CD4-positive, alpha-beta T cell (primary cell): ENCODE measurements at regions of chr2 and their contacts with region 1.

Region 1: GRCh38 chr2:55050133-55050994 is at the start of gene RTN4:
- DNase-seq: peak; percentile 94 to 99 (median 98)
- ATAC-seq: peak; percentile 89
- H3K4me3 ChIP-seq: peak within 1 kb of the TSS; percentile 90
- H3K4me3 Mint-ChIP-seq: peak within 1 kb of the TSS; percentile 99
- H3K27ac ChIP-seq: peak within 1 kb of the TSS; percentile 83 to 90
- H3K27ac Mint-ChIP-seq: peak within 1 kb of the TSS; percentile 97
- H3K4me1 ChIP-seq: peaks cover 30% of the 10 kb centered on the region
- H3K4me1 Mint-ChIP-seq: peaks cover 81% of the 10 kb centered on the region
- H3K27me3 ChIP-seq: no peaks in the 10 kb centered on the region
- H3K27me3 Mint-ChIP-seq: no peaks in the 10 kb centered on the region
- CTCF ChIP-seq: no peak
- total RNA-seq, gene RTN4: 84.9 to 85.7 TPM

Region 2: GRCh38 chr2:55014962-55015939 is 35.1 kb before region 1 on chr2:
- CTCF ChIA-PET with region 1: interaction called, 24 read pairs
- POLR2A ChIA-PET with region 1: interaction called, 13 read pairs
- intact Hi-C with region 1: loop called in 1 of 2 experiments (anchors 2 kb)
- DNase-seq: peak in 13 of 14 experiments; percentile 4 to 74 (median 26)
- ATAC-seq: peak; percentile 23
- H3K4me3 ChIP-seq: no peak overlapping the region
- H3K4me3 Mint-ChIP-seq: no peak overlapping the region
- H3K27ac ChIP-seq: no peak overlapping the region
- H3K27ac Mint-ChIP-seq: no peak overlapping the region
- H3K4me1 ChIP-seq: peaks cover 4% of the 10 kb centered on the region
- H3K4me1 Mint-ChIP-seq: peaks cover 59% of the 10 kb centered on the region
- H3K27me3 ChIP-seq: no peaks in the 10 kb centered on the region
- H3K27me3 Mint-ChIP-seq: no peaks in the 10 kb centered on the region
- CTCF ChIP-seq: peak; percentile 82

Region 3: DNA sequence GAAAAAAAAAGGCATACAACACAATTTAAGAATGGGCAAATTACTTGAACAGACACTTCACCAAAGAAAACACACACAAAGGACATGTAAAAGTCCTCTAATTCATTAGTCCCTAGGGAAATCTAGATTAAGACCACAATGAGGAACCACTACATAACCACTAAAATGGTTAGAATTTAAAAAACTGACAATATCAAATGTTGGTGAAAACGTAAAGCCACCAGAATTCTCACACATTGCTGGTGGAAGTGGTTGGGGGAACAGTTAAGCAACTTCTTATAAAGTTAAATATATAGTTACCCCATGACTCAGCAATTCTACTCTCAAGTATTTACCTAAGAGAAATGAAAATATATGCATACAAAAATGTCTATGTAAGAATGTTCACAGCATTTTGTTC is 11.9 kb before region 1 on chr2:
- CTCF ChIA-PET with region 1: interaction called, 5 read pairs
- POLR2A ChIA-PET with region 1: interaction called, 28 read pairs
- intact Hi-C with region 1: loop called in 1 of 2 experiments (anchors 2 kb)
- DNase-seq: no peak
- ATAC-seq: no peak
- H3K4me3 ChIP-seq: no peak overlapping the region
- H3K4me3 Mint-ChIP-seq: no peak overlapping the region
- H3K27ac ChIP-seq: no peak overlapping the region
- H3K27ac Mint-ChIP-seq: no peak overlapping the region
- H3K4me1 ChIP-seq: peaks cover 4% of the 10 kb centered on the region
- H3K4me1 Mint-ChIP-seq: peaks cover 70% of the 10 kb centered on the region
- H3K27me3 ChIP-seq: no peaks in the 10 kb centered on the region
- H3K27me3 Mint-ChIP-seq: no peaks in the 10 kb centered on the region
- CTCF ChIP-seq: no peak

Region 4: GRCh38 chr2:55223958-55224760 is 173.8 kb after region 1 on chr2:
- CTCF ChIA-PET with region 1: interaction called, 11 read pairs
- POLR2A ChIA-PET with region 1: interaction called, 14 read pairs
- intact Hi-C with region 1: loop called in 1 of 2 experiments (anchors 2 kb)
- DNase-seq: peak in 3 of 14 experiments; percentile 9 to 46 (median 34)
- ATAC-seq: no peak
- H3K4me3 ChIP-seq: peak overlapping the region; percentile 53
- H3K4me3 Mint-ChIP-seq: peak overlapping the region; percentile 87
- H3K27ac ChIP-seq: peak overlapping the region in 1 of 2 donors; percentile 80
- H3K27ac Mint-ChIP-seq: peak overlapping the region; percentile 86
- H3K4me1 ChIP-seq: peaks cover 14% of the 10 kb centered on the region
- H3K4me1 Mint-ChIP-seq: peaks cover 42% of the 10 kb centered on the region
- H3K27me3 ChIP-seq: no peaks in the 10 kb centered on the region
- H3K27me3 Mint-ChIP-seq: no peaks in the 10 kb centered on the region
- CTCF ChIP-seq: no peak

Region 5: DNA sequence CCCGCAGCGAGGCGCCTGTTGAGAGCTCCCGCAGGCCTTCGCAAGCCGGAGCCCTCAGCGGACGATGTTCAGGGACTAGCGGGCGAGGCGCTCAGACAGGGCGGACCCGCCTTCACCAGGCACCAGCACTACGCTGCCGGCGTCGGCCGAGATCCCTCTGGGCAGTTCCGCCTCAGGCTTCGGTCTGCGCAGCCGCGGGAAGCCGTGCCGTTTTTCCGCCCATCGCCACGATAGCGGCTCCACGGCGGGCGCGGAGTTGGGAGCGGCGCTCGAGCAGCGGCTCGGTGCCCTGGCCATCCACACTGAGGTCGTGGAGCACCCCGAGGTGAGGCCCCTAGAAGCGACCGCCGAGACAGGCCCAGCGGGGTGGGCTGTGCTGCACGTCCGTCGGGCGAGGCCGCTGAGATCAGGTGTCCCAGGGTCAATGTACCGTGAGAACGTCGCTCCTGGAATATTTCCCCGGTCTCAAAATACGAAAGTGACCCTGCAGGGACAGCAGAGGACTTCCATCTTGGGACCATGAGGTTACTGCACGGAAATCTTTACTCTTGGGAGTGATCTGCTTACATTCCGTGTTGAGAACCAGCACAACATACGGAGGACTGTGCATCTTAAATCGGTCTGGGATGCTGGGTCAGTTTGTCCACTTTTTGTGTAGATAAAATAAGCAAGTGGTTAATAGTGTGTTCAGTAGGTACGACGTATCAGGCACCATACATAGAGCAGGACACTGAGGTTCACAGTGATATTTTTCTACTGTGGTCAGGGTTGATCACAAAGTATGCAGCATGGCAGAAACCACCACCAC is 231.9 kb after region 1 on chr2:
- CTCF ChIA-PET with region 1: no interaction called
- POLR2A ChIA-PET with region 1: no interaction called
- intact Hi-C with region 1: loop called in 1 of 2 experiments (anchors 5 kb)
- DNase-seq: peak; percentile 77 to 93 (median 86)
- ATAC-seq: peak; percentile 98
- H3K4me3 ChIP-seq: peak overlapping the region; percentile 81
- H3K4me3 Mint-ChIP-seq: peak overlapping the region; percentile 96
- H3K27ac ChIP-seq: peak overlapping the region; percentile 78 to 88
- H3K27ac Mint-ChIP-seq: peak overlapping the region; percentile 97
- H3K4me1 ChIP-seq: peaks cover 11% of the 10 kb centered on the region
- H3K4me1 Mint-ChIP-seq: peaks cover 31% of the 10 kb centered on the region
- H3K27me3 ChIP-seq: no peaks in the 10 kb centered on the region
- H3K27me3 Mint-ChIP-seq: no peaks in the 10 kb centered on the region
- CTCF ChIP-seq: no peak

Region 6: GRCh38 chr2:55519938-55520885 is 469.8 kb after region 1 on chr2:
- CTCF ChIA-PET with region 1: no interaction called
- POLR2A ChIA-PET with region 1: interaction called, 10 read pairs
- intact Hi-C with region 1: loop called in 1 of 2 experiments (anchors 10 kb)
- DNase-seq: peak; percentile 9 to 63 (median 36)
- ATAC-seq: peak; percentile 32
- H3K4me3 ChIP-seq: peak overlapping the region; percentile 73
- H3K4me3 Mint-ChIP-seq: peak overlapping the region; percentile 96
- H3K27ac ChIP-seq: peak overlapping the region; percentile 86 to 89
- H3K27ac Mint-ChIP-seq: peak overlapping the region; percentile 98
- H3K4me1 ChIP-seq: peaks cover 11% of the 10 kb centered on the region
- H3K4me1 Mint-ChIP-seq: peaks cover 17% of the 10 kb centered on the region
- H3K27me3 ChIP-seq: no peaks in the 10 kb centered on the region
- H3K27me3 Mint-ChIP-seq: no peaks in the 10 kb centered on the region
- CTCF ChIP-seq: no peak